Activated naive CD4-positive, alpha-beta T cell treated with anti-CD3 and anti-CD28 coated beads for 36 hours (primary cell): ENCODE measurements at regions of chr2 and their contacts with region 1.

Region 1: DNA sequence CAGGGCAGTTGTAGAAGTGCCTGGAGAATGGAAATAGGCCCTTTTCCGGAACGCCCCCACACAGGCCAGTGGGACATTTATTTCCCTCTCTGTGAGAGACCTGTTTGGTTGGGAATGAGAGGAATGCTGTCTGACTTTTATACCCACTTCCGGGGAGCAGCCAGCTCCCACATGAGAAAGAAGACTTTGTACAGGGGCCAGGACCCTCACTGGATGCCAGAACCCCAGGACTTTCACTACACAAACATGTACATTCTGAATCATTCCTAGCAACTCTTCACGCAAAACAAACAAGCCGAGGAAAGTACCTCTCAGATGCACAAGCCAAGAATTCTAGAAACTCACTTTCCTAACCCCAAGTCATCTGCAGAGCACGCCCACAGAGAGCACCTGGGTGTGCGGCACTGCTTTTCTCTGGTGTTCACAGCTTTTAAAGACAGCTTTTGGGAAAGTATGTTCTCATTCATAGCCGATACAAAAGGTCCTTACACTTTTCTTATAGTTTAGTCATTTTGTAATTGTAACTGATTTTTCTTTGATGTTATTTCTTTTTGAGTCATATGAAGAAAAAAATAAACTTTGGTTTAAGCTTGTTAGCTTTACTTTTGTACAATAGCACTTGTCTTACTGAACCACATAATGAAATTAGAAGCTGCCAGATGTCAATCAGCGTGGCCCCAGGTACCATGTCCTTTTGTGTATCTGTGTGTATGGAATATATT is 856.1 kb upstream of the ID2 start:
- DNase-seq: peak; percentile 86
- H3K4me3 Mint-ChIP-seq: no peak overlapping the region
- H3K27ac Mint-ChIP-seq: peak overlapping the region; percentile 86
- H3K4me1 Mint-ChIP-seq: peaks cover 16% of the 10 kb centered on the region
- H3K27me3 Mint-ChIP-seq: no peaks in the 10 kb centered on the region

Region 2: DNA sequence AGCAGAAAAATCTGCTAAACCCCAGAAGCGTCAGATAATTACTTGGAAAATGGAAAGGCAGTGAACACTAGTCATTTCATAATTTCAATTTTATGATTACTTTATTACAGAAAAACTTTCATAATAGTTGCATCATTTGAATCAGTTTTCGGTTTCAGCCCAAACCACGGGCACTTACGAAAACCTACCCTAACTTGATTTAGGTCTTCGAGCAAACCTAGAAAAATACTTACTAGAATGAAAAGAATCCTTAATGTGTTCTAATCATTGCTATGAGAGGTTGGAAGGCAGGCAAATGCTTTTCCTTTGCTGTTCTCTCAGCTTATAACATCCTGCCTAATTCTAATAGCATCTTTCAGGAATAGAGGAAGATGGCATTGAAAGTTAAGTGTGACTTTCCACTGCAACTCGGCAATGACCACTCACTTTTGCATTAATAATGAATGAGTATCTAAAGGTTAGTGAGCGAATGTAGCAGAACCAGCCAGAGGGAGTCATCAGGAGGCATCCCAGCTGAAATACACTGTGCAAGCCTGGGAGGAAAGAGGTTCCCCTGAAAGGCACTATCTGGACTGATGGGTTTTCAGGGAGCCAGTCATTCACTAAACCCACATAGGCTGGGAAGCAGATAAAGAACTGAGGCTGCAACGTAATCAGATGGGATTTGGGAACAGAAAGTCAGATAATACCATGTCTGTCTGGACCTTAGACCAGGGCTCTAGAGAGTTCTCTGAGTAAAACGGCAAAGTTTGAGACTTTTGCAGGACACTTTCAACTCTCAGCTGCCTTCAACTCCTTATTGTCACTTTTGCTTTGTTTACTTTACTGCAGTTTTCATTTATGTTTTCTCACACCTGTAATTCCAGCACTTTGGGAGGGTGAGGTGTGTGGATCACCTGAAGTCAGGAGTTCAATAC is 387.8 kb before region 1 on chr2:
- CTCF ChIA-PET with region 1: no interaction called
- intact Hi-C with region 1: loop called (anchors 1 kb)
- DNase-seq: peak; percentile 69
- H3K4me3 Mint-ChIP-seq: no peak overlapping the region
- H3K27ac Mint-ChIP-seq: peak overlapping the region; percentile 87
- H3K4me1 Mint-ChIP-seq: peaks cover 68% of the 10 kb centered on the region
- H3K27me3 Mint-ChIP-seq: no peaks in the 10 kb centered on the region

Region 3: DNA sequence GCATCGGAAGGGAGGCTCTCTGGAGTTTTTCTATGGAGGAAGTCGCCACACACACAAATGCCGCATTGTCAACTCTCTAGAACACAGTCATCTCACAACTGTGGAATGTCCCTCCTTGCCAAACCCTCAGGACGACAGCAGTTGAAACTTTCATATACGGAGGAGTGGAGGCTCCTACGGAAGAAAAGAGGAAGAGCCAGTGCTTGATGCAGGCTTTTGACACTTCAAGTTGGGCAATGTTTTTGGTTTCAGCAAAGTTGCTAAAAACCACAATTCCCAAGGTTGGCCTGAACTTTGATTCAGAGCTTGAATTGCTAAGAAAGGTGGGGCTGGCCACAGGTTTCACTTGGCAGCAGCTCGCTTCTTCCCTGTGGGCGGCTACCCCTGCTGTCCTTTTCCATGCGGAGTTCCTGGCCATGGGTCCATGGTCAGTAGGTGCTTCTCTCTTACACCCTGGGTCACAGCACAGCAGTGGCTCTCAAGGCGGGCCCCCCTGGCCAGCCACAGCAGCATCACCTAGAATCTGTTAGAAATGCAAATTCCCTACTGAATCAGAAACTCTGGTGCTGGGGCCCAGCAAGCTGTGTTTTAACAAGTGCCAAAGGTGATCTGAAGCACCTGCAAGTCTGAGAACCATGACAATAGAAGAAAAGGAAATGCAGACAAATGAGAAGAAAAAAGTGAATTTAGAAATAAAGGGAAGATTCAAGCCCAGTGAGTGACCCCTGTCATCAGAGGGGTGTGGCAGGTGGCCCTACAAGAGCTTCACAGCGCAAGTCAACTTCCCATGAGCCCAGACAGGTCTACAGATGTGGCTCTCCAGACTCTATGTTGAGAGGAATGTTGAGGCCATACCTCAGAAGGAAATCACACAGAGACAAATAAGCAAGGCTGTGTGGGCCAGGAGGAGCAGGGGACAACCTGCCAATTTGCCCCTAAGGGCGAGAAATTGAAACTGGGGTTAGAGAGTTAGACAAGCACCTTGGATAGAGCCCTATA is 52.1 kb before region 1 on chr2:
- CTCF ChIA-PET with region 1: no interaction called
- intact Hi-C with region 1: loop called (anchors 1 kb)
- DNase-seq: peak; percentile 59
- H3K4me3 Mint-ChIP-seq: no peak overlapping the region
- H3K27ac Mint-ChIP-seq: no peak overlapping the region
- H3K4me1 Mint-ChIP-seq: peaks cover 20% of the 10 kb centered on the region
- H3K27me3 Mint-ChIP-seq: no peaks in the 10 kb centered on the region

Region 4: DNA sequence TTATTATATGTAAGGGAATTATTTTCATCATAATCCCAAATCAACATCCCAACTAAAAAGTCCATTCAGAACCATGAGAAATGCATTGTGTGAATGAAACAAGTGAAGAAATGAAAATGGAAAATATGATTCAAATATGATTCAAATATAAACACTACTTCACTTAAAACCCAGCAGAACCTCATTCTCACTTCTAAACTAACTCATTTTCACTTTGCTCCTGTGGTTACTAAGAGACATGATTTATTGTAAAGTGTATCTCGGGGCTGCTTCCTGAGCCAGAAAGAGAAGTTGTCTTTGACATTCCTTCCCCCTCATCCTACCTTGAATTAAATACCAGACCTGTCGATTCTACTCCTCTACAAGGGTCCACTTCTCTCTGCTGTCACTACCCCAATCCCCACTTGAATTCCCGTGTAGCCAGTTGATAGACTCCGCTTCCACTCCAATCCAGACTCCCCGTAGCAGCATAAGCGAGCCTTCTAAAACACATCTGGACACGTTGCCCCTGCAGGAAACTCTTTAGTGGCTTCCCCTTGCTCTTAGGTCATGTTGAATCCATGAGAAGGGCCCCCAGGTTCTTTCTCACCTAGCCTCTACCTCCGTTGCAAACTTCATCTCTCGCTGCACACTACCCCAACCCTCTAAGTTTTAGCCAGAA is 159.1 kb after region 1 on chr2:
- CTCF ChIA-PET with region 1: no interaction called
- intact Hi-C with region 1: loop called (anchors 1 kb)
- DNase-seq: peak; percentile 22
- H3K4me3 Mint-ChIP-seq: peak overlapping the region; percentile 8
- H3K27ac Mint-ChIP-seq: peak overlapping the region; percentile 62
- H3K4me1 Mint-ChIP-seq: peaks cover 20% of the 10 kb centered on the region
- H3K27me3 Mint-ChIP-seq: peaks cover 4% of the 10 kb centered on the region

Region 5: GRCh38 chr2:8303322-8303832 is 477.6 kb after region 1 on chr2:
- CTCF ChIA-PET with region 1: no interaction called
- intact Hi-C with region 1: loop called (anchors 1 kb)
- DNase-seq: peak; percentile 69
- H3K4me3 Mint-ChIP-seq: no peak overlapping the region
- H3K27ac Mint-ChIP-seq: no peak overlapping the region
- H3K4me1 Mint-ChIP-seq: peaks cover 39% of the 10 kb centered on the region
- H3K27me3 Mint-ChIP-seq: peaks cover 5% of the 10 kb centered on the region